Lower lobe of right lung (tissue), 2 donors: ENCODE measurements at regions of chr11 and their contacts with region 1.

Region 1: DNA sequence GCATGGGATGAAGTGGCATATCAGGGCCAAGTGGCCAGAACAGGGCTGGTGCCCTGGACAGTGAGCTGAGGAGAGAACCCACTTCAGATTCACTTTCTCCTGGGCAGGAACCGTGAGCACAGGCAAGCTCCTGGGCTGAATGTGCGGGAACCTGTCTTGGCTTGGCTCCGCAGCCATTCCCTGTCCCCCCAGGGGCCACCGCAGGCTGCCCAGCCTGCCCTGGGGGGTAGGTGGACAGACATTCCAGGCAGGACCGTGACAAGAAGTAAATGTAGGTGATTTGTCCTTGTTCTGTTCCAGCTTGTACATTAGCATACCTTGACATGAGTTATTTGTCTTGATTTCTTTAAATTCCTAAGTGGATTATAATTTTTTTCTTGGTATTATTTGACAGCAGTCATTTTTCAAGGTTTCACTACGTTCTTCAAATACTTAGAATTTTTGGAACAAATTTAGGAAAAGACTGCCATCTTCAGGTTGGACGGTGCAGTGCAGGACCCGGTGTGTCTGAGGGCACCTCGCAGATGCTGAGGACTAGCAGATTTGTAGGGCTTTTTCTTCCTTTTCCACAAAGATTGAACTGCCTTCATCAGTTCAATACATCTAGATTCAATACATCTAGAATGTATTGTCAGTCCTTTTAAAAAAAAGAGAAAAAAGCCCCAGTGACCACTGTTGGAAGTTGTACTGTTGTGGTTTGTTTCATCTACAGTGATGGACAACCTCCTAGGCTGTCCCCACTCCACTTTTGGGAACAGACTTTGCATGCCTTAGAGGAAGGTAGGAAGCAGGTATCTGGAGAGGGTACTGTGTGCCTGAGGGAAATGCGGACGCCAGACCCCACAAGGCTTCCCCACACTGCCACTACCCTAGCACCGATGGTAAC is 115.1 kb upstream of the RASSF10 start:
- DNase-seq: peak; percentile 60
- ATAC-seq: peak; percentile 64 to 70
- H3K4me3 ChIP-seq: no peak overlapping the region
- H3K27ac ChIP-seq: no peak overlapping the region
- H3K4me1 ChIP-seq: peaks cover 12% of the 10 kb centered on the region
- H3K27me3 ChIP-seq: no peaks in the 10 kb centered on the region
- CTCF ChIP-seq: peak; percentile 91

Region 2: GRCh38 chr11:12331239-12331874 is 562.7 kb before region 1 on chr11:
- intact Hi-C with region 1: loop called (anchors 5 kb)
- DNase-seq: peak; percentile 76
- ATAC-seq: peak; percentile 88 to 90
- H3K4me3 ChIP-seq: no peak overlapping the region
- H3K27ac ChIP-seq: no peak overlapping the region
- H3K4me1 ChIP-seq: no peaks in the 10 kb centered on the region
- H3K27me3 ChIP-seq: no peaks in the 10 kb centered on the region
- CTCF ChIP-seq: peak; percentile 78

Region 3: DNA sequence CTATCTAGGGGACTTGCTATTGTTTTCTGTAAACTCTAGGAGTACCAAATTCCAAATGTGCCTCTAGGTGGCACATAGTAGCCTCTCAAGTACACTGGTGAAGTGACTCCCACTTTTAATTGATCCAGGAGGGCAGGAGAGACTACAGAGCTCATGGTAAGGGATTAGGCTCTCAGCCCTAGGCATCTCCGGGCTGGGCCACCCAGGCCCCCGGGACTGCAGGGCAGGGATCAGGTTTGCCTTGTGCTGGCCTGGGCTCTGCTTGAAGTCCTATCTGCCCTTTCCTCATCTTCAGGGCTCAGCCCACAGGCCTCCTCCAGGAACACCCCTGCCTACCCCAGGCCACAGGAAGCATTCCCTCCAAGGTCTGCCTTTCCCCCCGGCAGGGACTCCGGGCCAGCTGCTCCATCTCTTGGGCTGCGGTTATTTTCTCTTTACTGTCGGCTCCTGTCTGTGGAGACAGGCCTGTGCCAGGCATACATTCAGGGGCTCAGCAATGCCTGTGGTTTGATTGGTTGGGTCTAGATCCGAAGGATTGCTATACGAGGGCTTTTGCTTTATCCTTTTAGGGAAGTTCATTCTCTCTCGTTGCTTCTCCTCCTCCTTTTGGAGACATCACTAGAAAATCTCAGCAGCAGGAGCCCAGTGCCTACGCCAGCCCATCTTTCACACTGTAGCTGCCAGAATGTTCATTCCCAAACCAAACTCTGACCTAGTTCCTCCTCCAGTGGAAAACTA is 483.9 kb before region 1 on chr11:
- intact Hi-C with region 1: loop called (anchors 5 kb)
- DNase-seq: no peak
- ATAC-seq: peak; percentile 6 to 12
- H3K4me3 ChIP-seq: no peak overlapping the region
- H3K27ac ChIP-seq: peak overlapping the region; percentile 38
- H3K4me1 ChIP-seq: peaks cover 44% of the 10 kb centered on the region
- H3K27me3 ChIP-seq: no peaks in the 10 kb centered on the region
- CTCF ChIP-seq: no peak

Region 4: GRCh38 chr11:13030857-13031256 is 136.8 kb after region 1 on chr11:
- intact Hi-C with region 1: no loop called
- DNase-seq: peak; percentile 52
- ATAC-seq: peak; percentile 64 to 71
- H3K4me3 ChIP-seq: no peak overlapping the region
- H3K27ac ChIP-seq: no peak overlapping the region
- H3K4me1 ChIP-seq: peaks cover 9% of the 10 kb centered on the region
- H3K27me3 ChIP-seq: no peaks in the 10 kb centered on the region
- CTCF ChIP-seq: no peak